ENCODE measurements at regions of chr2 and their contacts with region 1.

Region 1: DNA sequence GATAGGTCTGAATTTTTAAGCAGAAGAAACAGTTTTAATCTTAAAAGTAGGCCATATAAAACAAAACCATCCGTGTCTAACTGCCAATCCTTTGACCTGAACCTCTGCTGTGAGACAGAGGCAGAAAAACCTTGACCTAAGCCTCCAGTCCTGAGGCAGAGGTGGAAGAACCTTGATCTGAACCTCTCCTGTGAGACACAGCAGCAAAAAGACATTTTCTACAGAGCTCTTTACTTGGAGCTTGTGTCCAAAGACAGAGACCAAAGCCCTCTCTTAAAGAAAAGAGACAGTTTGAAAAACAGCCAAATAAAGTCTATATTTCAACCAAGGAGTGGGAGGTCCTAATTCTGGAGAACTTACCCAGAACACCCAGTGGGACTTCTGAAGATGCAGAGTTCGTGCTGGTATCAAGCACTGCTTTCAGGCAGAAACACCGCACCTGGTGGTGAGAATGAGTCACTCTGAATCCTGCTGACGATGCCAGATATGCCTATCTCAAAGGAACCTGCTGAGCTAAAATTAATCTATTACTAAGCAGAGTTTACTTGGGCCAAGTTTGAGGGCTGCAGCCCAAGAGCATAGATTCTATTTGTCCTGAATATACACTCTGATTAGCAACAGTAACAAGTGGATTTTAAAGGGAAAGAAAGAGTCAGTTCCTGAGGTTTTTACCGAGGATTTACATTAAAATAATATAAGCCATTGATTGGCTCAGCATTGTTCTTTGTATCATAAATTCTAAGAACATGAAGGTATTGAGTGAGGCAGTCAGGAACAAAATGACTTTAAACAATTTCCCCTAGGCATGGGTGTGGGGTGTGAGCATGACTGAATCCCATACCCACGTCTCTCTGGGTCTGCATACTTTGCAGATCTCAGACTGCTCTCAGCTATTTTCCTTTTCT is 806.4 kb downstream of the TRIB2 start:
- DNase-seq: peak; percentile 88
- ATAC-seq: peak; percentile 92
- H3K4me3 ChIP-seq: peak overlapping the region; percentile 45; the same call in 1 of the 2 replicates
- H3K27ac ChIP-seq: peak overlapping the region; percentile 97
- H3K4me1 ChIP-seq: peaks cover 11% of the 10 kb centered on the region; the same call in 1 of the 2 replicates
- H3K27me3 ChIP-seq: no peaks in the 10 kb centered on the region
- CTCF ChIP-seq: peak; percentile 29 to 36 (median 32); a peak in 5 of 6 replicates
- EP300 ChIP-seq: peak in 1 of 2 experiments; percentile 83; a peak in 2 of 4 replicates
- POLR2A ChIP-seq: no peak
- RAD21 ChIP-seq: peak; percentile 47; the same call in 1 of the 2 replicates

Region 2: GRCh38 chr2:13006829-13007717 is 516.1 kb before region 1 on chr2:
- CTCF ChIA-PET with region 1: no interaction called
- POLR2A ChIA-PET with region 1: no interaction called
- RAD21 ChIA-PET with region 1: no interaction called
- SMC1A ChIA-PET with region 1: no interaction called
- in situ Hi-C with region 1: no loop called
- intact Hi-C with region 1: no loop called
- DNase-seq: no peak
- ATAC-seq: peak; percentile 93
- H3K4me3 ChIP-seq: no peak overlapping the region
- H3K27ac ChIP-seq: no peak overlapping the region
- H3K4me1 ChIP-seq: no peaks in the 10 kb centered on the region
- H3K27me3 ChIP-seq: no peaks in the 10 kb centered on the region; a peak in 1 of 4 replicates
- CTCF ChIP-seq: peak; percentile 65 to 78 (median 69)
- EP300 ChIP-seq: no peak
- POLR2A ChIP-seq: no peak
- RAD21 ChIP-seq: peak; percentile 75

Region 3: DNA sequence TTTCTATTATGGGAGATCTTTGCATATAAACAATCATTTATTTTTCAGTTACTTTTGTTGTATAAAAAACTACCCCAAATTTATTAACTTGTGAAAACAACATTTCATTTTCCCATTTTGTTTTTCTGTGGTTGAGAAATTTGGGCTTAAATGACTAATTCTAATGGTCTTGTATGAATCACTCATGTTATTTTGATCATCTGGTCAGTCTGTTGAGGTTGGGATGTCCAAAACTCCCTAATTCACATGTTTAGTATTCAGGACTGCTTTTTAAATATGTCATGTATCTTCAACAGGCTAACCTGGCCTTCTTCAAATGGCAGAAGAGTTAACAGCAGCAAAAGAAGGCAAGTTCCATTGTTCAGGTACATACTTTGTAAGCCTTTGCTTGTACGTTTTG is 18.4 kb before region 1 on chr2:
- CTCF ChIA-PET with region 1: interaction called, 10 read pairs
- POLR2A ChIA-PET with region 1: interaction called, 4 read pairs
- RAD21 ChIA-PET with region 1: interaction called, 3 read pairs
- SMC1A ChIA-PET with region 1: interaction called, 33 read pairs
- in situ Hi-C with region 1: no loop called
- intact Hi-C with region 1: loop called (anchors 2 kb)
- DNase-seq: no peak
- ATAC-seq: peak; percentile 93
- H3K4me3 ChIP-seq: no peak overlapping the region
- H3K27ac ChIP-seq: peak overlapping the region; percentile 48; the same call in 1 of the 2 replicates
- H3K4me1 ChIP-seq: no peaks in the 10 kb centered on the region
- H3K27me3 ChIP-seq: no peaks in the 10 kb centered on the region
- CTCF ChIP-seq: no peak
- EP300 ChIP-seq: peak; percentile 70 to 81
- POLR2A ChIP-seq: no peak
- RAD21 ChIP-seq: 0 out of 2 replicates have a peak, but pooled peaks have one; percentile 15

Region 4: GRCh38 chr2:13545320-13545719 is 22.2 kb after region 1 on chr2:
- CTCF ChIA-PET with region 1: interaction called, 7 read pairs
- POLR2A ChIA-PET with region 1: interaction called, 5 read pairs
- RAD21 ChIA-PET with region 1: interaction called, 70 read pairs
- SMC1A ChIA-PET with region 1: interaction called, 46 read pairs
- in situ Hi-C with region 1: no loop called
- intact Hi-C with region 1: no loop called
- DNase-seq: no peak
- ATAC-seq: peak; percentile 67
- H3K4me3 ChIP-seq: no peak overlapping the region
- H3K27ac ChIP-seq: no peak overlapping the region
- H3K4me1 ChIP-seq: peaks cover 8% of the 10 kb centered on the region; the same call in 1 of the 2 replicates
- H3K27me3 ChIP-seq: no peaks in the 10 kb centered on the region
- CTCF ChIP-seq: no peak
- EP300 ChIP-seq: peak; percentile 34 to 47; a peak in 2 of 4 replicates
- POLR2A ChIP-seq: no peak
- RAD21 ChIP-seq: no peak

Region 5: DNA sequence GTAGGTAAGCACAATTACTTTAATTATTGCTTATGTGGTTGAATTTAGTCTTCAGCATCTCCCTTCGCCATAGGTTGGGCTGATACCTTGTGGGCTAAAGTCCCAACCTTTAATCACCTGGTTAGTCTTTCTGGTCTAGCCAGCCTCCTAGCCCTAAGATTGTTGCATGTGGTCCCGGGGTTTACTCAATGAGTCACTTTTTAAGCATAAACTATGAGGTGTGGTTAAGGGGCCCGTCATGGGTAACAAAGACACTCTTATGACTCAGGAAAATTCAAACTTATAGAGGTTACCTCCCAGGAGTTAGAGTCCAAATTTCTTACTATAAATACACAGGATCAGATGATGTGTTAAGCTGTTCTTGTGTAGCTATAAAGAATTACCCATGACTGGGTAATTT is 35.2 kb after region 1 on chr2:
- CTCF ChIA-PET with region 1: interaction called, 4 read pairs
- POLR2A ChIA-PET with region 1: interaction called, 4 read pairs
- RAD21 ChIA-PET with region 1: interaction called, 32 read pairs
- SMC1A ChIA-PET with region 1: interaction called, 48 read pairs
- in situ Hi-C with region 1: no loop called
- intact Hi-C with region 1: loop called (anchors 5 kb)
- DNase-seq: no peak
- ATAC-seq: peak; percentile 92
- H3K4me3 ChIP-seq: no peak overlapping the region
- H3K27ac ChIP-seq: no peak overlapping the region
- H3K4me1 ChIP-seq: no peaks in the 10 kb centered on the region
- H3K27me3 ChIP-seq: no peaks in the 10 kb centered on the region
- CTCF ChIP-seq: no peak
- EP300 ChIP-seq: peak; percentile 64 to 71; a peak in 3 of 4 replicates
- POLR2A ChIP-seq: no peak
- RAD21 ChIP-seq: peak; percentile 14; the same call in 1 of the 2 replicates

Region 6: DNA sequence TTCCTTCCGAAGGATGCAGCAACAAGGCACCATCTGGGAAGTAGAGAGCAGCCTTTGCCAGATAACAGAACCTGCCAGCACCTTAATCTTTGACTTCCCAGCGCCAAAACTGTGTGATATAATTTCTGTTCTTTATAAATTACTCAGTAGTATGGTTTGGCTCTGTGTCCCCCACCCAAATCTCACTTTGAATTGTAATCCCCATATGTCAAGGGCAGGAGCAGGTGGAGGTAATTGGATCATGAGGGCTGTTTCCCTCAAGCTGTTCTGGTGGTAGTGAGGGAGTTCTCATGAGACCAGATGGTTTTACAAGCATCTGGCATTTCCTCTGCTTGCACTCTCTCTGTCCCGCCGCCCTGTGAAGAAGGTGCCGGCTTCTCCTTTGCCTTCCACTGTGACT is 93.4 kb after region 1 on chr2:
- CTCF ChIA-PET with region 1: no interaction called
- POLR2A ChIA-PET with region 1: no interaction called
- RAD21 ChIA-PET with region 1: no interaction called
- SMC1A ChIA-PET with region 1: no interaction called
- in situ Hi-C with region 1: no loop called
- intact Hi-C with region 1: no loop called
- DNase-seq: no peak
- ATAC-seq: no peak
- H3K4me3 ChIP-seq: no peak overlapping the region
- H3K27ac ChIP-seq: no peak overlapping the region
- H3K4me1 ChIP-seq: no peaks in the 10 kb centered on the region
- H3K27me3 ChIP-seq: no peaks in the 10 kb centered on the region
- CTCF ChIP-seq: no peak
- EP300 ChIP-seq: no peak
- POLR2A ChIP-seq: no peak
- RAD21 ChIP-seq: no peak

Region 7: GRCh38 chr2:13698449-13699246 is 175.5 kb after region 1 on chr2:
- CTCF ChIA-PET with region 1: no interaction called
- POLR2A ChIA-PET with region 1: no interaction called
- RAD21 ChIA-PET with region 1: no interaction called
- SMC1A ChIA-PET with region 1: no interaction called
- in situ Hi-C with region 1: no loop called
- intact Hi-C with region 1: no loop called
- DNase-seq: no peak
- ATAC-seq: no peak
- H3K4me3 ChIP-seq: no peak overlapping the region
- H3K27ac ChIP-seq: no peak overlapping the region
- H3K4me1 ChIP-seq: no peaks in the 10 kb centered on the region
- H3K27me3 ChIP-seq: no peaks in the 10 kb centered on the region
- CTCF ChIP-seq: no peak
- EP300 ChIP-seq: no peak
- POLR2A ChIP-seq: no peak
- RAD21 ChIP-seq: no peak

Measured in GM12878 (cell line).